GM13977 (cell line): ENCODE measurements at regions of chr2 and their contacts with region 1.

Region 1: GRCh38 chr2:85420536-85421259 is 2.2 kb downstream of the SH2D6 start:
- DNase-seq: peak; percentile 91
- CTCF ChIP-seq: peak; percentile 98

Region 2: DNA sequence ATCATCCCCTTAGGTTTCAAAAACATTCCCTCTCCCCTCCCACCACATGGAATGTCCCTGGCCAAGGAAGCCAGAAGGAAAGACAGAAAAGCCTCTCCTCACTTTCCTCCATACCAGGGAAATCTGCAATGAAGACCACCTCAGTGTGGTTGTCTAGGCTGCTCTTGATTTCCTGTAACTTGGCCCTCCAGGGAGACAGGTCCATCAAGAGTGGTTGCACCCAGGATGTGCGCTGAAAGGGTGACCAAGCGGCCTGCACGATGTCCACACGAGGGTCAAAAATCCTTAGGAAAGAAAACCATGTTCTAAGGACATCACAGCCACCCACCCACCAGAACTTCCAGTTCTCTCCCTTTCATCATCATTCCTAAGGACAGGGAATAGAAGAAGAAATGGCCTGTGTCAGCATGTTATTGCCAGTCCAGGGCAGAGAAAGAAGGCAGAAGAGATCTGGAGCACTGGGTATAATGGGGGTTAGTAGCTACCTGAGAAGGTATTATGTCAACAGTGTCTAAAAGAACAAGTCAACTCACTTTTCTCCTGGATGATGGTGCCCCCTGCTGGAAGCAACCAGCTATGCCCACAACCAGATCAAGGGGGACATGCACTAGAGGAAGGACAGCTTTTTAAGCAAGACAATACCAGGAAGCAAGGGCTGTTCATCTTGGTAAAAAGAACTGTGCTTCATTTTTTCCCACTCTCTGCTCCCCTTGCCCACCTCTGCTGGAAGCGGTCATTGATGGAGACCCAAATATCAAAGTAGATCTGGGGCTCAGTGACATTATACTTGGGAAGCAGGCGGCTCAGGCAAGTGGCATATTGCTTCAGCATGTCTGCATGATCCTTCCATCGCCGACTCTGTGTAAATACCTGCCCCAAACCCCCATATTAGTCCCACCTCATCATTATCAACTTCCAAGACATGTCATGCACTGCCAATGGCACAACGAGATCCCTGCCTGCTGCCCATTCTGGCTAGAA is 131.3 kb after region 1 on chr2:
- in situ Hi-C with region 1: loop called (anchors 5 kb)
- DNase-seq: peak; percentile 69
- CTCF ChIP-seq: peak; percentile 86